Body of pancreas (tissue), 4 donors: ENCODE measurements at regions of chr17 and their contacts with region 1.

Region 1: GRCh38 chr17:35969558-35970380 is 11.5 kb downstream of the CCL16 start:
- DNase-seq: peak; percentile 82 to 87 (median 86)
- ATAC-seq: peak; percentile 66
- H3K4me3 ChIP-seq: no peak overlapping the region
- H3K27ac ChIP-seq: no peak overlapping the region
- H3K4me1 ChIP-seq: peaks cover 15% of the 10 kb centered on the region
- H3K27me3 ChIP-seq: no peaks in the 10 kb centered on the region
- CTCF ChIP-seq: peak; percentile 77 to 92 (median 88)
- POLR2A ChIP-seq: no peak

Region 2: DNA sequence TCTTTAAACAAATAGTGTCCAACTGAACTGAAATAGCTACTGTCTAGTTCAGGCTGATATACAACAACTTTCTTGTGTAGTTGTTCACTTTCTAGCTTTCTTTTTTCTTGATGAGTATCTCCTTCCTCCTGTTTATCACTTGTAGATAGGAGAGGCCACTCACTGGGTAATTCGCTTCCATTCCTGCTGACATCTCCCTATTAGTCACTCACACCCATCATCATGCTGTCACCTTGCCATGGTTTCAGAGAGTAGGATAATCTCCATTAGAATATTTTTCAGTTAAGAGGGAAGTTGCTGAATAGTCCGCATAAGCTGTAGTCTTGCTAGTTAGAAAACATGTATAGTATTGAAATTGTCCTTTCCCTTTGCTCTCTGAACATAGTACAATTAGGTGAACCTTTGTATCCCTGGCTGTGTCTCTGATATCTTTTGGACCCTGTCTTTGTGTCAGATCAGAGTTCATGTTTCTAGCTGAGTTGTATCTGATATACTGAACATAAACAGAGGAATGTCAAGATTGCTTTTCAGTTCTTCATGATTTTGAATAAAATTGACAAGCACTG is 302.7 kb before region 1 on chr17:
- intact Hi-C with region 1: no loop called
- DNase-seq: no peak
- ATAC-seq: no peak
- H3K4me3 ChIP-seq: no peak overlapping the region
- H3K27ac ChIP-seq: no peak overlapping the region
- H3K4me1 ChIP-seq: no peaks in the 10 kb centered on the region
- H3K27me3 ChIP-seq: no peaks in the 10 kb centered on the region
- CTCF ChIP-seq: no peak
- POLR2A ChIP-seq: no peak

Region 3: DNA sequence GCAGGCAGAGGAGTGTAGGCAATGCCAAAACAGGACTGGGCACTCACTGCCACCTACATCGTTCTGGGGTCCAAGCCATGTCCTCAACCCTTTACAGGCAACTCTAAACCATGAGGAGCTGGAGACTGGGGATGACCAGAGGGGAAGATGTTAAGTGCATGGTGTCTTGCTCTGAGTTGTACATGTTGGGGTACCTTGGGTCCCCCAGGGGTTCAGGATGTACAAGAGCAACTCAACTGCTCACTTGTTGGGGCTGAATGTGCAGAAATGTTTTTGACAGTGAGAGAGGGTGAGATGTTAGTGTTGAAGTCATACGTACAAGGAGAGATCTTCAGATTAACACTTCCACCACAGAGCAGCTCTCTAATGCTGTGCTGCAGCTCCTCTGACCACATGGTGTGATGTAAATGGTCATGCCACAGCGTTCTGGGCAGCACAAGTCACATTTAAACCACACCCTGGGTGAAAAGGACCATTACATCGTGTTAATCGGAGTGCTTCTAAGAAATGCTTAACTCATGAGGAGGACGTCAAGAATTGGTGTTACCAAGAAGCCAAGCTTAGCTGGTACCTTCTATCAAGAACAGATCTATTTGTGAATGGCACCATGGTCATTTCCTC is 96.7 kb after region 1 on chr17:
- intact Hi-C with region 1: loop called (anchors 10 kb)
- DNase-seq: peak in 1 of 4 donors; percentile 22
- ATAC-seq: peak; percentile 15
- H3K4me3 ChIP-seq: no peak overlapping the region
- H3K27ac ChIP-seq: no peak overlapping the region
- H3K4me1 ChIP-seq: no peaks in the 10 kb centered on the region
- H3K27me3 ChIP-seq: no peaks in the 10 kb centered on the region
- CTCF ChIP-seq: no peak
- POLR2A ChIP-seq: no peak

Region 4: GRCh38 chr17:36148559-36149295 is 179.0 kb after region 1 on chr17:
- intact Hi-C with region 1: loop called (anchors 5 kb)
- DNase-seq: peak; percentile 50 to 76 (median 64)
- ATAC-seq: peak; percentile 83
- H3K4me3 ChIP-seq: no peak overlapping the region
- H3K27ac ChIP-seq: no peak overlapping the region
- H3K4me1 ChIP-seq: no peaks in the 10 kb centered on the region
- H3K27me3 ChIP-seq: no peaks in the 10 kb centered on the region
- CTCF ChIP-seq: peak; percentile 88 to 100 (median 95)
- POLR2A ChIP-seq: no peak